Endothelial cell of umbilical vein (primary cell): ENCODE measurements at regions of chr4 and their contacts with region 1.

Region 1: DNA sequence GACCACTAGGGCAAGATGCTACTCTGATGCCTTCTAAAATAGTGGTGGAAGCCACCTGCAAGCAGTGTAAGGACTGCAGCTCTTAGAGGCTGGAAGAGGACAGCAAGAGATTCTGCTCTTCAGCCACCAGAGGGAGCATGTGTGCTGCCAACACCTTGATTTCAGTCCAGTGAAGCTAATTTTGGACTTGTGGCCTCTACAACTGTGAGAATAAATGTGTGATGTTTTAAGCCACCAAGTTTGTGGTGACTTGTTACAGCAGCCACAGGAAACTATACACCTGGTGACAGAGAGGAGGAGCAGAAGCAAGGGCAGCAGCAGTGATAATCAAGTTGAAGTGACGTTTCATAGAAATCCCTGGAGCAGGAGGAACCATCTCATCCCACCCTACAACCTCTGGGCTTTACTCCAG is 55.9 kb downstream of the FGFBP1 start:
- DNase-seq: peak; percentile 72
- H3K4me3 ChIP-seq: no peak overlapping the region
- H3K27ac ChIP-seq: no peak overlapping the region
- H3K4me1 ChIP-seq: no peaks in the 10 kb centered on the region
- H3K27me3 ChIP-seq: no peaks in the 10 kb centered on the region
- CTCF ChIP-seq: peak; percentile 74 to 90
- POLR2A ChIP-seq: no peak

Region 2: GRCh38 chr4:15469402-15470127 is 413.1 kb before region 1 on chr4 and contains the start of gene CC2D2A:
- CTCF ChIA-PET with region 1: interaction called, 11 read pairs
- POLR2A ChIA-PET with region 1: no interaction called
- dilution Hi-C with region 1: no loop called
- intact Hi-C with region 1: no loop called
- DNase-seq: peak; percentile 67
- H3K4me3 ChIP-seq: peak within 1 kb of the TSS; percentile 44 to 83 (median 51)
- H3K27ac ChIP-seq: no peak within 1 kb of the TSS
- H3K4me1 ChIP-seq: peaks cover 3% of the 10 kb centered on the region
- H3K27me3 ChIP-seq: peaks cover 2 to 10% of the 10 kb centered on the region in 2 experiments
- CTCF ChIP-seq: no peak
- POLR2A ChIP-seq: no peak
- total RNA-seq, gene CC2D2A: 13.2 and 22.4 TPM in 2 replicates

Region 3: DNA sequence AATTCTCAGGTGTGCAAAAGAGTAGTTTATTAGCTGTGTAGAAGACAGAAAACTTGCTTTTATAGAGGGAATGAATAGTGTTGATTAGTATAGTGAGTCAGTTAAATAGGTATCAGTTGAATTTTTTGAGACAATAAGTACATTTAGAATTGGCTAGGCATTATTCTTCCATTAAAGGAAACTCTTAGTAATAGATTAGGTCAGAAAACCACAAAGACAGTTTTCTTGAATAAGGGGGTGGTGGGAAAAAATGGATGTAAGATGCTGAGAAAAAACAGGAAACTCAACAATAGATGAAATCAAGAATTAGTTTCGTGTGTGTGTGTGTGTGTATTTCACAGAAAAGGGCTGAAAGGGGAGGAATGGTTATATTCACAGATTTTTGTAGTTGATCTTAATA is 87.8 kb before region 1 on chr4:
- CTCF ChIA-PET with region 1: no interaction called
- POLR2A ChIA-PET with region 1: no interaction called
- dilution Hi-C with region 1: no loop called
- intact Hi-C with region 1: no loop called
- DNase-seq: peak; percentile 34
- H3K4me3 ChIP-seq: no peak overlapping the region
- H3K27ac ChIP-seq: no peak overlapping the region
- H3K4me1 ChIP-seq: no peaks in the 10 kb centered on the region
- H3K27me3 ChIP-seq: peaks cover 5 to 14% of the 10 kb centered on the region in 2 experiments
- CTCF ChIP-seq: no peak
- POLR2A ChIP-seq: no peak

Region 4: DNA sequence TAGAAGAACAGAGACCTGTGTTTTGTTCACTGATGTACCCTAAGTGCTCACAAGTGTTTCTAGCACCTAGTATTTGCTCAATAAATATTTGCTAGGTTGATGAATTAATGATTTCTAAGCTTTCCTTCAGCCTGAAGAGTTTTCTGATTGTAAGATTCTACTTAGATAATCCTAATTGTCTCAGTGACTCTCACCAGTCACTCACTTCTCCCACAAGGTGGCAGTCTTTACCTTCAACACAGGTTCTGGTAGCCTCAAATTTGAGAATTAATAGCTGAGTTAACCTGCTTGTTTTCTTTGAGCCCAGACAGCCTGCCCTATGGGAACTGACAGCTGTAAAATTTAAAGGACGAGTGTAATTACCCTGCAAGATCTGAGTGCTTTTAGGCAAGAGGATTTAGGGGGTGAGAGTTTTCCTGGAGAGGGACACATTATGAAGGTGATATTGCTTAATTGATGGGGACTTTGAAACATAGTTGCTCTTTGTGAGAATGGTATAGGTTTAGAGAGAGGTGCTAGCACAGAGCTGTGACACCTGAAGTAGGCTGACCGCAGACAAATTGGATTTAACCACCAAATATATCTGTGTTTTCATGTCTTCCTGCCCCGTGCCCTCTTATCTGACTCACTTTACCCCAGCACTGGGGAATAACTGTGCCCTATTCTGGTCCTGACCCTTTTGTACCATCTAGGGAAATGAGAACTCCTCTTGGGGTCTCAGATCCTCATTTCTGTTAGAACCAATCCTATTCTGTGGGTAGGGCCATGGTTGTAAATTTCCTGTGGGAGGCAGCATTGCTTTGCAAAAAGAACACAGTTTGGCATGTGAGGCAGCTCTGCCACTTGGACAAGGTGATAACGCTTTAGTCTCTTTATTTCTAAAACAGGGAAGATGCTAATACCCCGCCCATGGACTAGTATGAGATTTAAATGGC is 76.8 kb before region 1 on chr4:
- CTCF ChIA-PET with region 1: interaction called, 75 read pairs
- POLR2A ChIA-PET with region 1: no interaction called
- dilution Hi-C with region 1: no loop called
- intact Hi-C with region 1: loop called (anchors 1 kb)
- DNase-seq: peak; percentile 58
- H3K4me3 ChIP-seq: no peak overlapping the region
- H3K27ac ChIP-seq: no peak overlapping the region
- H3K4me1 ChIP-seq: peaks cover 4% of the 10 kb centered on the region
- H3K27me3 ChIP-seq: peaks cover 15 to 28% of the 10 kb centered on the region in 2 experiments
- CTCF ChIP-seq: peak; percentile 63 to 65
- POLR2A ChIP-seq: no peak

Region 5: DNA sequence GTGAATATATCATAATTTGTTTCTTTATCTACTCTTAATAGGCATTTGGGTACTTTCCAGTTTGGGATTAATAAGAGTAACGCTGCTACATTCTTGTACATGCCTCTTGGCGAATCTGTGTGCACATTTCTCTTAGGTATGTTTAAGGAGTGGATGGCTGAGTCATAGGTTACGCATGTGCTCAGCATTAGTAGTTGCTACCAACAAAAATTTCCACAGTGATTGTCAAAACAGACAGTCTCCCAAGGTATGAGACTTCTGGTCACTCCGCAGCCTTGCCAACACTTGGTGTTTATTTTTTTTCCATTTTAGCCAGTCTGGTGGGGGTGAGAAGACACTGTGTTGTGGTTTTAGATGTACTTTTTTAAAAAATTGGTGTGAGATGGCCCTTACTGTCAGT is 11.3 kb after region 1 on chr4:
- CTCF ChIA-PET with region 1: interaction called, 25 read pairs
- POLR2A ChIA-PET with region 1: no interaction called
- dilution Hi-C with region 1: no loop called
- intact Hi-C with region 1: no loop called
- DNase-seq: no peak
- H3K4me3 ChIP-seq: no peak overlapping the region
- H3K27ac ChIP-seq: no peak overlapping the region
- H3K4me1 ChIP-seq: no peaks in the 10 kb centered on the region
- H3K27me3 ChIP-seq: peaks cover 9 to 19% of the 10 kb centered on the region in 2 experiments
- CTCF ChIP-seq: no peak
- POLR2A ChIP-seq: no peak

Region 6: GRCh38 chr4:15920723-15921591 is 38.3 kb after region 1 on chr4:
- CTCF ChIA-PET with region 1: interaction called, 20 read pairs
- POLR2A ChIA-PET with region 1: no interaction called
- dilution Hi-C with region 1: no loop called
- intact Hi-C with region 1: loop called (anchors 2 kb)
- DNase-seq: peak; percentile 89
- H3K4me3 ChIP-seq: no peak overlapping the region
- H3K27ac ChIP-seq: peak overlapping the region; percentile 24
- H3K4me1 ChIP-seq: peaks cover 11% of the 10 kb centered on the region
- H3K27me3 ChIP-seq: no peaks in the 10 kb centered on the region
- CTCF ChIP-seq: no peak
- POLR2A ChIP-seq: no peak

Region 7: DNA sequence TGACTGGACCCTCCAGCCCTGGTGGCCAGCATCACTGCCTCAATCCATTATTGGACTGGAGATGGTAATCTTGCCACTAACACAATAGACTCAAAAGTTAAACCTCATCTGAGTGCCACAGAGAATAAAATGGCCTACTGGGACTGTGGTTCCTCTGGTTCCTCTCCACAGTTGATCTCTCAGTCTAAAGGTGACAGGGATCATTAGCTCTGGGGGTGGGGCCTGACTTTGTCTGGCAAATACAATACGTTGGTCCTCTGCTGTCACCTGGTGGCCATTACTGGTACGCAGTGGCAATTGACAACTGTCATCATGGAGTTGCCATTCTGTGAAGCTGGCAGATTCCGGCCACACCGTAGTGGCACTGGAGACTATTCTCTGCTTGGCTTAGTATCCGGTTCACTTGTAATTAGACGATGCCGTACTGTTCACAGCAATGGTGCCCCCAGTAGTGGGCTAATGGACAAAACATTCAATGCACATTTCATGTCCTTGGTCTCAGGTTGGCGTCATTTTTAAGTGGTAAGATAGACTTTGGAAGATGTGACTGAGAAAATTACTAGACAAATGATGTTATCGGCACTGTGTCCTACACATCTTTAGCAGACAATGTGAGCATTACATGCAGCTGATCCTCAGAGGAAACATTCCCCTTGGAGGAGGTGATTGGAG is 73.6 kb after region 1 on chr4:
- CTCF ChIA-PET with region 1: interaction called, 465 read pairs
- POLR2A ChIA-PET with region 1: interaction called, 3 read pairs
- dilution Hi-C with region 1: no loop called
- intact Hi-C with region 1: loop called (anchors 1 kb)
- DNase-seq: peak; percentile 69
- H3K4me3 ChIP-seq: no peak overlapping the region
- H3K27ac ChIP-seq: no peak overlapping the region
- H3K4me1 ChIP-seq: no peaks in the 10 kb centered on the region
- H3K27me3 ChIP-seq: no peaks in the 10 kb centered on the region
- CTCF ChIP-seq: peak; percentile 75 to 84
- POLR2A ChIP-seq: no peak

Region 8: GRCh38 chr4:16001484-16001858 is 118.8 kb after region 1 on chr4:
- CTCF ChIA-PET with region 1: interaction called, 81 read pairs
- POLR2A ChIA-PET with region 1: no interaction called
- dilution Hi-C with region 1: no loop called
- intact Hi-C with region 1: loop called (anchors 1 kb)
- DNase-seq: peak; percentile 73
- H3K4me3 ChIP-seq: no peak overlapping the region
- H3K27ac ChIP-seq: no peak overlapping the region
- H3K4me1 ChIP-seq: no peaks in the 10 kb centered on the region
- H3K27me3 ChIP-seq: peaks cover 6% of the 10 kb centered on the region in 2 experiments
- CTCF ChIP-seq: peak; percentile 78 to 85
- POLR2A ChIP-seq: no peak